IMR-90 (cell line): ENCODE measurements at regions of chr2 and their contacts with region 1.

Region 1: GRCh38 chr2:178193823-178194599 is at the start of gene OSBPL6:
- DNase-seq: peak; percentile 82
- ATAC-seq: peak; percentile 92
- H3K4me3 ChIP-seq: peak within 1 kb of the TSS; percentile 90
- H3K27ac ChIP-seq: peak within 1 kb of the TSS; percentile 31; the same call in 1 of the 2 replicates
- H3K4me1 ChIP-seq: no peaks in the 10 kb centered on the region
- H3K27me3 ChIP-seq: no peaks in the 10 kb centered on the region
- CTCF ChIP-seq: peak; percentile 35
- POLR2A ChIP-seq: no peak
- RAD21 ChIP-seq: no peak; the same call in 1 of the 2 replicates
- total RNA-seq, gene OSBPL6: 2.8 and 3.2 TPM in 2 replicates

Region 2: DNA sequence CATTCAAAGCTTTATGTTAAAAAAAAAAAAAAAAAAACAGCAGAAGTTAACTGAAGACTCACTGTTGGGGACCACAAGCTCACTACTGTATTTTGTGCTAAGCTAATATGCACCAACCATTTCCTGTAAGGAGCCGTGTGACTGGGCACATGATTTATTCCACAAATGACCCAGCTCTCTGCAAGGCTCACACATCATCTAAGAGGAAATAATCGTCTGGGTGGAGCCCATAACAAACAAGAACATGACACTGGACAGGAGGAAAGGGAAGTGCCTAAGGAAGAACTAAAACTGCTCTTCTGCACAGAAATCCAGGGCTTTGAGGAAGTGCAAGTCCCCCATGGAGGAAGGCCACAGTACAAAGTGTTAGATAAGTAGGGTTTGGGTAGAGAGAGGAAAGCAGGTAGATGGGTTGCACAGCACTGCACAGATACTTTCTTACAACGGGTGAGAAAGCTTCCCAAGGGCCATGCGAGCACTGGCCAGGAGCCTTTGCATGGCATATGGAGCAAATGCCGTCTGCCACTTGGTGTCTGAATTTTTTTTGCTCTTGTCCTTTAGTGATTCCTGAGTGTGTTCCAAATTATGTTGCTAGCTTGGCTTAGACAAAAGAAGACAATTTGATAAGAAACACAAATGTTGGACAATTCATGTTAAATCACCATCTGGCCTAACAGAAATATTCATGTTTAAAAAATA is 953.9 kb before region 1 on chr2:
- CTCF ChIA-PET with region 1: no interaction called
- POLR2A ChIA-PET with region 1: no interaction called
- dilution Hi-C with region 1: no loop called
- in situ Hi-C with region 1: no loop called
- intact Hi-C with region 1: no loop called
- DNase-seq: peak; percentile 49
- ATAC-seq: no peak
- H3K4me3 ChIP-seq: no peak overlapping the region
- H3K27ac ChIP-seq: peak overlapping the region; percentile 82
- H3K4me1 ChIP-seq: peaks cover 32% of the 10 kb centered on the region
- H3K27me3 ChIP-seq: no peaks in the 10 kb centered on the region
- CTCF ChIP-seq: no peak
- POLR2A ChIP-seq: no peak
- RAD21 ChIP-seq: no peak

Region 3: GRCh38 chr2:177724398-177725287 is 469.4 kb before region 1 on chr2:
- CTCF ChIA-PET with region 1: no interaction called
- POLR2A ChIA-PET with region 1: no interaction called
- dilution Hi-C with region 1: no loop called
- in situ Hi-C with region 1: no loop called
- intact Hi-C with region 1: no loop called
- DNase-seq: peak; percentile 42
- ATAC-seq: peak; percentile 85
- H3K4me3 ChIP-seq: no peak overlapping the region
- H3K27ac ChIP-seq: no peak overlapping the region
- H3K4me1 ChIP-seq: no peaks in the 10 kb centered on the region
- H3K27me3 ChIP-seq: peaks cover 8% of the 10 kb centered on the region
- CTCF ChIP-seq: peak; percentile 82
- POLR2A ChIP-seq: no peak
- RAD21 ChIP-seq: peak; percentile 87

Region 4: GRCh38 chr2:177983183-177983788 is 210.7 kb before region 1 on chr2:
- CTCF ChIA-PET with region 1: no interaction called
- POLR2A ChIA-PET with region 1: no interaction called
- dilution Hi-C with region 1: no loop called
- in situ Hi-C with region 1: no loop called
- intact Hi-C with region 1: loop called (anchors 10 kb)
- DNase-seq: peak; percentile 71
- ATAC-seq: peak; percentile 96
- H3K4me3 ChIP-seq: no peak overlapping the region
- H3K27ac ChIP-seq: no peak overlapping the region
- H3K4me1 ChIP-seq: no peaks in the 10 kb centered on the region
- H3K27me3 ChIP-seq: no peaks in the 10 kb centered on the region; the same call in 1 of the 2 replicates
- CTCF ChIP-seq: peak; percentile 86
- POLR2A ChIP-seq: no peak
- RAD21 ChIP-seq: peak; percentile 84

Region 5: GRCh38 chr2:178128836-178129630 is 65.0 kb before region 1 on chr2:
- CTCF ChIA-PET with region 1: no interaction called
- POLR2A ChIA-PET with region 1: no interaction called
- dilution Hi-C with region 1: no loop called
- in situ Hi-C with region 1: no loop called
- intact Hi-C with region 1: loop called (anchors 2 kb)
- DNase-seq: peak; percentile 32
- ATAC-seq: no peak
- H3K4me3 ChIP-seq: no peak overlapping the region
- H3K27ac ChIP-seq: no peak overlapping the region
- H3K4me1 ChIP-seq: peaks cover 5% of the 10 kb centered on the region
- H3K27me3 ChIP-seq: no peaks in the 10 kb centered on the region
- CTCF ChIP-seq: no peak
- POLR2A ChIP-seq: no peak
- RAD21 ChIP-seq: no peak

Region 6: GRCh38 chr2:178280244-178280852 is 86.3 kb after region 1 on chr2:
- CTCF ChIA-PET with region 1: no interaction called
- POLR2A ChIA-PET with region 1: no interaction called
- dilution Hi-C with region 1: no loop called
- in situ Hi-C with region 1: no loop called
- intact Hi-C with region 1: loop called (anchors 2 kb)
- DNase-seq: peak; percentile 59
- ATAC-seq: peak; percentile 72
- H3K4me3 ChIP-seq: no peak overlapping the region
- H3K27ac ChIP-seq: no peak overlapping the region
- H3K4me1 ChIP-seq: no peaks in the 10 kb centered on the region
- H3K27me3 ChIP-seq: no peaks in the 10 kb centered on the region
- CTCF ChIP-seq: peak; percentile 73
- POLR2A ChIP-seq: no peak
- RAD21 ChIP-seq: peak; percentile 54